ENCODE measurements at regions of chr2 and their contacts with region 1.

Region 1: DNA sequence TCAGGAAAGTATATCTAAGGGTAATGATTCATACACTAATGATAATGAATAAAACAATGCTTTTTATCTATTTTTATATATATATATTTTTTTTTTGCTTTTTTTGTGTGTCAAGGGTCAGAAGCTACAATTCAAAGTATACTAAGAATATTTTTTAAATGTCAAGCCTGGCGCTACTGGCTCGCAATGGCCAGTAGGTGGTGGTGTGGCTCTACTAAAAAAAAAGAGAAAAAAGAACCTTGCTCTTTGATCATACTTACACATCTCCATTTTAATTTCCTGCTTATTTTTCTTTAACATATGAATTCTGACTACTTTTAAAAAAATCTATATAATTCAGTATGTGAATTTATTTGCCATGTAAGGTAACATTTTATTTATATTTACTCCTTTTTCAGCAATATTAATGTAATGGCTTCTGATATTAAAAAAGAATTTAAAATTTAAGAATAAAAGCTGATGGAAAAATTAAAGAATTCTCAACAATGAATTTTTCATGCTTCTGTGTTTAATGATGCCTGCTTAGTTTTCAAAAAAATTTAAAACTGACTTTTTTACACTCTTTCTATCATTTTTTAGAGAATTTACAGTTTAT is 232.9 kb downstream of the GULP1 start:
- DNase-seq: no peak
- H3K4me3 ChIP-seq: no peak overlapping the region
- H3K27ac ChIP-seq: no peak overlapping the region
- H3K4me1 ChIP-seq: no peaks in the 10 kb centered on the region
- H3K27me3 ChIP-seq: no peaks in the 10 kb centered on the region
- CTCF ChIP-seq: peak; percentile 43 to 62 (median 44)

Region 2: GRCh38 chr2:188170356-188170755 is 354.3 kb before region 1 on chr2:
- dilution Hi-C with region 1: no loop called
- DNase-seq: no peak
- H3K4me3 ChIP-seq: no peak overlapping the region
- H3K27ac ChIP-seq: no peak overlapping the region
- H3K4me1 ChIP-seq: no peaks in the 10 kb centered on the region
- H3K27me3 ChIP-seq: no peaks in the 10 kb centered on the region
- CTCF ChIP-seq: no peak

Region 3: DNA sequence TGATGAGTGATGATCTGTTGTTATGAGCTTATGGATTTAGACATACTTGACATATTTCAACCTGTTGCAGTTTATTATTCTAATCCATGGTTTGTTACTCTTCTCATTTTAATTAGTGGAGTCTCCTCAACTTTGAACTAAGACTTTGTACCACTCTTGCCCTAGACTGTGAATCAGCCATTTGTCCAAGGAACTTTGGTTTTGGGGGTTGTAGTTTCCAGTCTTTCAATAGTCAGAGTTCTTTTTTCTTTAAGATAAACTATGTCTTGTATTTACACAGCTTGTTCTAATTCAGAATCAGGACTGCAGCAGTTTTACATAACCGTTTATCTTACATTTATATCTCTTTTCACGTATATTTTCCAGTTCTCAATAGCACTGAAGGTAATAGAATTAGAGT is 99.3 kb before region 1 on chr2:
- dilution Hi-C with region 1: no loop called
- DNase-seq: no peak
- H3K4me3 ChIP-seq: no peak overlapping the region
- H3K27ac ChIP-seq: no peak overlapping the region
- H3K4me1 ChIP-seq: no peaks in the 10 kb centered on the region
- H3K27me3 ChIP-seq: no peaks in the 10 kb centered on the region
- CTCF ChIP-seq: no peak

Region 4: GRCh38 chr2:188978291-188979081 is 453.9 kb after region 1 on chr2:
- dilution Hi-C with region 1: loop called (anchors 25 kb)
- DNase-seq: no peak
- H3K4me3 ChIP-seq: no peak overlapping the region
- H3K27ac ChIP-seq: no peak overlapping the region
- H3K4me1 ChIP-seq: no peaks in the 10 kb centered on the region
- H3K27me3 ChIP-seq: no peaks in the 10 kb centered on the region
- CTCF ChIP-seq: no peak

Measured in keratinocyte (primary cell).